Activated CD4-positive, alpha-beta memory T cell treated with anti-CD3 and anti-CD28 coated beads for 36 hours (primary cell): ENCODE measurements at regions of chr6 and their contacts with region 1.

Region 1: GRCh38 chr6:148440877-148441453 is 98.3 kb downstream of the SASH1 start:
- DNase-seq: no peak
- H3K4me3 Mint-ChIP-seq: no peak overlapping the region
- H3K27ac Mint-ChIP-seq: no peak overlapping the region
- H3K4me1 Mint-ChIP-seq: peaks cover 9% of the 10 kb centered on the region
- H3K27me3 Mint-ChIP-seq: peaks cover 12% of the 10 kb centered on the region

Region 2: GRCh38 chr6:147141711-147142308 is 1299.2 kb before region 1 on chr6:
- CTCF ChIA-PET with region 1: no interaction called
- POLR2A ChIA-PET with region 1: no interaction called
- intact Hi-C with region 1: no loop called
- DNase-seq: no peak
- H3K4me3 Mint-ChIP-seq: no peak overlapping the region
- H3K27ac Mint-ChIP-seq: no peak overlapping the region
- H3K4me1 Mint-ChIP-seq: no peaks in the 10 kb centered on the region
- H3K27me3 Mint-ChIP-seq: no peaks in the 10 kb centered on the region

Region 3: DNA sequence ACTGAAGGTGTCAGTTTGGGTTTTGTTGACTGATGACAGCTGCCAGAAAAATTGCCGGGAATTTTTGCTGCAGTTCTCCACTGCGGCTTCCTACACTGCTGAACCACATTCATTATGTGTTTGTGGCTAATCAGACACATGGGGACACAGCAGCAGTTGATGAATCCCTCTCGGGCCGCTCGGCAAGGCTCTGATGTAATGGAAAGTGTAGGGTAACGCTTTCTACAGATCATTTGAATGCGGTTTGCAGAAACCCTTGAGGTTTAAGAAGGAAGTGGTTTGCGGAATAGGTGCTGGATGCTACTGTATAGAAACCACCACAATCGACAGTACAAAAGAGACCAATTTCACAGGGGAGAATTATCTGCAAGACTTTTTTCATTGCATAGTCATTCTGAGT is 237.0 kb before region 1 on chr6:
- CTCF ChIA-PET with region 1: no interaction called
- POLR2A ChIA-PET with region 1: no interaction called
- intact Hi-C with region 1: loop called (anchors 1 kb)
- DNase-seq: peak; percentile 80
- H3K4me3 Mint-ChIP-seq: peak overlapping the region; percentile 55
- H3K27ac Mint-ChIP-seq: peak overlapping the region; percentile 72
- H3K4me1 Mint-ChIP-seq: peaks cover 35% of the 10 kb centered on the region
- H3K27me3 Mint-ChIP-seq: peaks cover 69% of the 10 kb centered on the region

Region 4: GRCh38 chr6:148451690-148452089 is 10.7 kb after region 1 on chr6:
- CTCF ChIA-PET with region 1: no interaction called
- POLR2A ChIA-PET with region 1: interaction called, 3 read pairs
- intact Hi-C with region 1: loop called (anchors 1 kb)
- DNase-seq: peak; percentile 73
- H3K4me3 Mint-ChIP-seq: no peak overlapping the region
- H3K27ac Mint-ChIP-seq: no peak overlapping the region
- H3K4me1 Mint-ChIP-seq: peaks cover 13% of the 10 kb centered on the region
- H3K27me3 Mint-ChIP-seq: peaks cover 2% of the 10 kb centered on the region

Region 5: GRCh38 chr6:148457137-148457842 is 16.3 kb after region 1 on chr6:
- CTCF ChIA-PET with region 1: no interaction called
- POLR2A ChIA-PET with region 1: interaction called, 8 read pairs
- intact Hi-C with region 1: loop called (anchors 2 kb)
- DNase-seq: no peak
- H3K4me3 Mint-ChIP-seq: no peak overlapping the region
- H3K27ac Mint-ChIP-seq: peak overlapping the region; percentile 33
- H3K4me1 Mint-ChIP-seq: peaks cover 8% of the 10 kb centered on the region
- H3K27me3 Mint-ChIP-seq: no peaks in the 10 kb centered on the region

Region 6: GRCh38 chr6:148520109-148520841 is 79.3 kb after region 1 on chr6:
- CTCF ChIA-PET with region 1: no interaction called
- POLR2A ChIA-PET with region 1: no interaction called
- intact Hi-C with region 1: loop called (anchors 5 kb)
- DNase-seq: no peak
- H3K4me3 Mint-ChIP-seq: no peak overlapping the region
- H3K27ac Mint-ChIP-seq: no peak overlapping the region
- H3K4me1 Mint-ChIP-seq: peaks cover 24% of the 10 kb centered on the region
- H3K27me3 Mint-ChIP-seq: peaks cover 5% of the 10 kb centered on the region